ENCODE measurements at regions of chr12 and their contacts with region 1.

Region 1: GRCh38 chr12:54658306-54659264 is 10.4 kb upstream of the DCD start:
- DNase-seq: peak; percentile 15
- H3K4me3 ChIP-seq: no peak overlapping the region
- H3K27ac ChIP-seq: no peak overlapping the region
- H3K4me1 ChIP-seq: no peaks in the 10 kb centered on the region
- H3K27me3 ChIP-seq: no peaks in the 10 kb centered on the region
- CTCF ChIP-seq: peak; percentile 66 to 67

Region 2: DNA sequence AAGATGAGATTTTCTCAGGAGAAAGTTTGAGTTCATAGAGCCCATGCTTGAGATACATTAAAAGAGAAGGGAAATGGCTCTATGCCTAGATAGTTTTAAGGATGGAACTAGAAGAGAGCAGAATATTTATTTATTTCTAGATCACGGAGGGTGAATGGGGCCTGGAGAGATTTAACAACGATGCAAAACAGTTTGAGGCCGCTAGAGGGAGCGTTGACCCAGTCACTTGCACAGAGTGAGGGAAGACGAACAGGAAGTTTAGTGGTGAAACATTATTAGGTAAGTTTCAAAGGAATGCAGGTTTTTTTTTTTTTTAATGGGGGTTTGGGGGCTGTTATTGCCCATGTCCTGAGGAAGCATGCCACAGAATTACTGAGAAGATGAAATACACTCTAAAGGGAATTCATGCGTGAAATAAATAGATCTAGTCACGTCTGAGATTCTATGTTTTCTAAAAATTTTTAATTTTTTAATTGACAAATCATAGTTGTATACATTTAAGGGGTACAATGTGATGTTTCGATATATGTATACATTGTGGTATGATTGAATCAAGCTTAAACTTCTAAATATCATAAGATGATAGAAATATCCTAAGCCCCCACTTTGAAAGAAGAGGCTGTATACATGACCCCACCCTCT is 55.3 kb before region 1 on chr12:
- CTCF ChIA-PET with region 1: no interaction called
- dilution Hi-C with region 1: no loop called
- in situ Hi-C with region 1: no loop called
- intact Hi-C with region 1: loop called (anchors 10 kb)
- DNase-seq: peak; percentile 60
- H3K4me3 ChIP-seq: no peak overlapping the region
- H3K27ac ChIP-seq: no peak overlapping the region
- H3K4me1 ChIP-seq: peaks cover 4% of the 10 kb centered on the region
- H3K27me3 ChIP-seq: no peaks in the 10 kb centered on the region
- CTCF ChIP-seq: peak; percentile 86 to 94

Region 3: GRCh38 chr12:54879150-54879549 is 220.6 kb after region 1 on chr12:
- CTCF ChIA-PET with region 1: no interaction called
- dilution Hi-C with region 1: no loop called
- in situ Hi-C with region 1: no loop called
- intact Hi-C with region 1: no loop called
- DNase-seq: no peak
- H3K4me3 ChIP-seq: no peak overlapping the region
- H3K27ac ChIP-seq: no peak overlapping the region
- H3K4me1 ChIP-seq: peaks cover 5% of the 10 kb centered on the region
- H3K27me3 ChIP-seq: no peaks in the 10 kb centered on the region
- CTCF ChIP-seq: no peak

Measured in mammary epithelial cell (primary cell).